A673 (cell line): ENCODE measurements at regions of chr10 and their contacts with region 1.

Region 1: DNA sequence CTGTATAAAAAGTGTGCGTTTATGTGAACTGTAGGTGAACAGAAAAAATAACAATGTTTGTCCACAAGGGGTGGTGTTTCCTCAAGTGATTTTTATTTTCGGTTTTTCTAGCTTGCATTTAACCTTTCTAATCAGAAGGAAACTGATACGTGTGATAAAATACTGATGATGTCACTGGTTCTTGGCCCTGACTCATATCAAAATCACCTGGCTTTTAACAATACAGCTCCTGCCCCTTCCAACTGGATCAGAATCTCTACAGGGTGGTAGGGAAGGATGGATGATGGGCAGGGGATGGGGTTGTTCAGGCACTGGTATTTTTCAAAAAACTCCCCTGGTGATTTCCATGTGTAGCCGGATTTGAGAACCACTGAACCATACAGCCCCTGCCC is 10.9 kb downstream of the NPFFR1 start:
- DNase-seq: peak; percentile 41
- H3K4me3 ChIP-seq: no peak overlapping the region
- H3K27ac ChIP-seq: no peak overlapping the region
- H3K4me1 ChIP-seq: no peaks in the 10 kb centered on the region
- H3K27me3 ChIP-seq: no peaks in the 10 kb centered on the region
- CTCF ChIP-seq: peak; percentile 62

Region 2: GRCh38 chr10:70250961-70251680 is 21.8 kb before region 1 on chr10:
- CTCF ChIA-PET with region 1: no interaction called
- POLR2A ChIA-PET with region 1: no interaction called
- intact Hi-C with region 1: no loop called
- DNase-seq: no peak
- H3K4me3 ChIP-seq: no peak overlapping the region
- H3K27ac ChIP-seq: no peak overlapping the region
- H3K4me1 ChIP-seq: no peaks in the 10 kb centered on the region
- H3K27me3 ChIP-seq: no peaks in the 10 kb centered on the region
- CTCF ChIP-seq: no peak

Region 3: DNA sequence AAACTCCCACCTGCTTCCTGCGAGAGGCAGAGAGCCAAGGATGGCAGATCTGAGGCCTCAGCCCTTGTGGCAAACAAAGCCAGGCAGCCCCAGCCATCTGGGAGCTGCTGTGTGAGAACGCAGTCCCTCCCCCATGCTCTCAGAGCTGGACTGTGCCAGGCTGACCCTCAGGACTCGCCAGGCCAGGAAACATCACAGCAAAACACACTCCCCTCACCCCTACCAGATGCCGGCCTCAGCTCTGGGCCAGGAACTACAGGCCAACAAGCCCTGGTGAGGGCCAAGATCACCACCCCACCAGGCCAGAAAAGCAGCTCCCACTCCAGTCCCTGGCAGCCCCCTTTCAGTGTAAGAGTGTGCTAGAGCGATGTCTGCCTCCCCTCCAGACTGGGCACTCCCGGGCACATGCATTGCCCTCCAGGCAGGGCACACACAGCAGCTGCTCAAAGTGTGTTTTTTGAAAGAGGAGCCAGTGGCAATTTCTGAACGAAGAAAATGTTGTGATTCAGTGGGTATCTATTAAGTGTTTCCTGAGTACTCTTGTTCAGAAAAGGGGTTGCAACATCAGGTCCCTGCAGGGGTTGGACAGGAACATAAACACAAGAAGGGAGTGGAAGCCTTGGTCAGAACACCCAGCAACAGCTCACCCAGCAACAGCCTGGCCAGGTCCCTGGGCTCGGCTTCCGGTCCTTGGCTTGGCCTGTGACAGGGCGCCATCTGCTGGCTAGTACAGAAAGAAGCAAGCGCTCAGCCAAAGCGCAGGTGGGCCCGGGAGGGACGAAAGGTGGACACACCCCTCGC is 91.2 kb after region 1 on chr10:
- CTCF ChIA-PET with region 1: interaction called, 7 read pairs
- POLR2A ChIA-PET with region 1: no interaction called
- intact Hi-C with region 1: loop called (anchors 5 kb)
- DNase-seq: peak; percentile 95
- H3K4me3 ChIP-seq: no peak overlapping the region
- H3K27ac ChIP-seq: peak overlapping the region; percentile 78
- H3K4me1 ChIP-seq: peaks cover 16% of the 10 kb centered on the region
- H3K27me3 ChIP-seq: no peaks in the 10 kb centered on the region
- CTCF ChIP-seq: peak; percentile 97